ENCODE measurements at regions of chr15 and their contacts with region 1.

Region 1: DNA sequence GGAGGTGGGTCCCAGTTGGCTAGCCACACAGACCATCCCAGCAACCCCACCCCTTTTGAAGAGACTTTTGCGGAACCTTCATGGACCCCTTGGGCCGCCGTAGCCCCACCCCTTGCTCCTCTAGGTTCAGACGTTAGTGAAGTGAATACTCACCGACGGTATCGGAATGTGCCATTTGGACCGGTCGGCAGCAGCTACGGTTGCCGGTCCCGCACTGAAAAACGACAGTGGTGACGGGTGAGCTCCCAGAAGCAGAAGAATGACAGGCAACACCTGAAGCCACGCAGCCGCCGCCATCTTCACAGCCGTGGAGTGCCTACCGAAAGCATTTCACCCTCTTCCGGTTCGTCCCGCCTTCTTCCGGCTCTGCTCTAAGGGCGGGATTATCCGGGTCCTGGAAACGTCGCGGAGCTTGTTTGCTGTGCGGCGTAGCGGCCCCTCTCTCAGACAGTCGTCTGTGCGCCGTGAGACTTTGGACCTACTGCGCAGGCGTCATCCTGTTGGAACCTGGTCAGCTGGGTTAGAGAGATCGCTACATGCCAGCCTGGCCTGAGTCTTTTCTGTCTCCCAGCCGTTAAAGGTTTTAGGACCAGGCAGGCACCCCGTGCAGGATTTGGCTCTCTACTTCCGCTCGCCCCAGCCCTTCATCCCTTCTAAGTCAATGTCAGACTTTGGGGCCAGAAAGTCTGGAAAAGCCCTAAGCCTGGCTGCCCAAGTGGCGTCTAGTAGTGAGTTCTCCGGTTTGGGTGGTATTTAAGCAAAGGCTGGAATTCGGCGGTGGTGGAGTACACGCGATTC is at the starts of genes GANC and TMEM87A:
- DNase-seq: peak; percentile 97
- ATAC-seq: peak; percentile 98 to 99
- total RNA-seq, gene GANC: 15.2 to 18.0 TPM
- total RNA-seq, gene TMEM87A: 19.9 to 28.3 TPM

Region 2: DNA sequence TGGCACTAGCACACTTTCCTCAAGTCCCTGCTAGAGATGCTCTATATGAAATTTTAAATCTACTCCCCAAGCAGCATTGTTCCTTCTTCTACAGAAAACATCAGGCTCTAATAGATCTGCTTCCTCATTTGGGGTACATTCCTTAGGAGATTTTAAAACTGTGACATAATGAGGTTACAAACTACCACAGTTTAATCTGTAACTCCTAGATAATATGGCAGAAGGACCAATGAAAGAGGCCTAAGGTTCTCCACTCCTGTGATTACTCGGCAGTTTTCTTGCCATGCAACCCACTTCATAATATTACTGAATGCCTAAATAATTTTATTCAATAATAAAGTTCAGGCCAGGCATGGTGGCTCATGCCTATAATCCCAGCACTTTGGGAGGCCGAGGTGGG is 201.5 kb after region 1 on chr15:
- intact Hi-C with region 1: loop called in 1 of 2 experiments (anchors 10 kb)
- DNase-seq: no peak
- ATAC-seq: no peak